ENCODE measurements at regions of chr10 and their contacts with region 1.

Region 1: GRCh38 chr10:102702742-102703141 is 11.5 kb downstream of the ARL3 start:
- DNase-seq: no peak
- H3K4me3 ChIP-seq: no peak overlapping the region
- H3K4me3 Mint-ChIP-seq: no peak overlapping the region
- H3K27ac Mint-ChIP-seq: no peak overlapping the region
- H3K4me1 ChIP-seq: peaks cover 11% of the 10 kb centered on the region
- H3K4me1 Mint-ChIP-seq: peaks cover 14% of the 10 kb centered on the region
- H3K27me3 ChIP-seq: no peaks in the 10 kb centered on the region
- H3K27me3 Mint-ChIP-seq: no peaks in the 10 kb centered on the region
- CTCF ChIP-seq: no peak

Region 2: DNA sequence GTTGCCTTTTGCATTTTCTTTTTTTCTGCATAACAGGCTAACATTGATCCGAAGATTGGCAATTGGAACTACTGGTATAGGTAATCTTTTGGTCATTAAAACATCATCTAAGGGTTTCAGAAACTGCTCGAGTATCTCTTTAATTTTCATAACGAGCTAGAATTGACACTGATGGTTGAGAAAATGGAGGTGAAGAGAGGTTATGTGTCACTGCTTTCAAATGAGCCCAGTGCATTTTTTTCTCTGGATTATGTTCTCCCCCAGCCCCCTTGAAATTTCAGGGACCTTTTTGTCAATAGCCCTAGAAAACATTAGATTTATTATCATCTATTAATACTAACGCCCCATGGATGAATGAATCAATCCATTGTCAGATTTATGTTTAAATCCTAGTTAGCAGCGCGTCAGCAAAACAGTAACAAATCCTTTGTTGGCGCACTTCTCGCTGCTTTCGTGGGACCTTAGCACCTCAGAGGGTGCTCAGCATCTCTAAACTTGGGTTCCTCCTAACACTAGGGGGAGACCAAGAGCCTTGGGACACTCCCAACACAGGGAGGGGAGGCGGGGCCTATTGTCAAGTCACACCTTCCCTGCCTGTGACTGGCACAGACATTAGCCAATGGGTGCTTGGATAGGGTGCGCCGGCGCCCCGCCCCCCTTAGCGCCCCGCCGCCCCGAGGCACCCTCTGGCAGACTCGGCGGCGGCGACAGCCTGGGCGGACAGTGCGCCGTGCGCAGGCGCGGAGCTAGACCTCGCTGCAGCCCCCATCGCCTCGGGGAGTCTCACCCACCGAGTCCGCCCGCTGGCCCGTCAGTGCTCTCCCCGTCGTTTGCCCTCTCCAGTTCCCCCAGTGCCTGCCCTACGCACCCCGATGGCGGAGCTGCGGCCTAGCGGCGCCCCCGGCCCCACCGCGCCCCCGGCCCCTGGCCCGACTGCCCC is 199.2 kb before region 1 on chr10 and contains the start of gene SUFU:
- CTCF ChIA-PET with region 1: no interaction called
- POLR2A ChIA-PET with region 1: no interaction called
- intact Hi-C with region 1: no loop called
- DNase-seq: peak; percentile 98 to 99
- H3K4me3 ChIP-seq: peak within 1 kb of the TSS; percentile 85
- H3K4me3 Mint-ChIP-seq: no peak within 1 kb of the TSS
- H3K27ac Mint-ChIP-seq: no peak within 1 kb of the TSS
- H3K4me1 ChIP-seq: no peaks in the 10 kb centered on the region
- H3K4me1 Mint-ChIP-seq: no peaks in the 10 kb centered on the region
- H3K27me3 ChIP-seq: no peaks in the 10 kb centered on the region
- H3K27me3 Mint-ChIP-seq: no peaks in the 10 kb centered on the region
- CTCF ChIP-seq: peak; percentile 76 to 96
- total RNA-seq, gene SUFU: 10.6 and 11.4 TPM in 2 replicates

Region 3: DNA sequence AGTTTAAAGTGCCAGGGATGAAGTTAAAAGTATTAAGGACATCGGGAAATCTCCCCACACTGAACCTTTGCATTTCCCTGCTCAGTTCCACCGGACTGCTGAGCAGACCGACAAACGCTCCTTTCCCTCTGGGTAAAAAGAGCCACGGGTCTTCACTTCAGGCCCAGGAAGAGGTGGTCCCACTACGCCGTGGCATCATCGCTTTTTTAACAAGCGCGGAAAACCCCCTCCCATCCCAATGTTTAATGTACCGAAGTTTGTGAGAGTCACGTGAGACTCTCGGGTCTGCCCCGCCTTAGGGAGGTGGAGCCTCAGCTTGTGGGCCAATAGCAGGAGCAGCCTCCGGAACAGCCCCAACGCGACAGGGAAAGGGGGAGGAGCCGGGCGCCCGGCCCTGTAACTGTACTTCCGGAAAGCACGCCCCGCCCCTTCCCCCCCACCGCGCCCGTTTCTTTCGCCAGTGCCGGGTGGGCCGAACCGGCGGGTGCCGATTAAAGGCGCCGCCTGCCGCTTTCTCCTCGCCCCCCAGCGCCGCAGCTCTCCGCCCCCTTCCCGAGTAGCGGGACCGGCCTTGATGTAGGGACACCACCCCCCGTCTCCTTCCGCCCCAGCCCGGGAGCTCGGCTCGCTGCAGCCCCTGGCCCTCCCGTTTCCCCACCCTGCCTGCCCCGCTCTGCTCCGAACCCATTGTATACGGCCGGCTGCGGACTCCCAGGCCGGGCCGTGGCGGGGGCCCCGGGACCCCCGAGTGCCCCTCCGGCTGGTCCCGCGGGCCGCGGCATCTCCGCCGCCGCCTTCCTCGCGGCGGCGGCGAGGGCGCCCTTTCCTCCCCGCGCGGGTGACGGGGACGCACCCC is 60.6 kb before region 1 on chr10:
- CTCF ChIA-PET with region 1: no interaction called
- POLR2A ChIA-PET with region 1: no interaction called
- intact Hi-C with region 1: no loop called
- DNase-seq: peak; percentile 97 to 98
- H3K4me3 ChIP-seq: peak overlapping the region; percentile 74
- H3K4me3 Mint-ChIP-seq: peak overlapping the region; percentile 92
- H3K27ac Mint-ChIP-seq: peak overlapping the region; percentile 78
- H3K4me1 ChIP-seq: peaks cover 11% of the 10 kb centered on the region
- H3K4me1 Mint-ChIP-seq: peaks cover 18% of the 10 kb centered on the region
- H3K27me3 ChIP-seq: no peaks in the 10 kb centered on the region
- H3K27me3 Mint-ChIP-seq: no peaks in the 10 kb centered on the region
- CTCF ChIP-seq: no peak

Region 4: GRCh38 chr10:102678842-102679289 is 23.9 kb before region 1 on chr10:
- CTCF ChIA-PET with region 1: no interaction called
- POLR2A ChIA-PET with region 1: interaction called, 13 read pairs
- intact Hi-C with region 1: no loop called
- DNase-seq: peak; percentile 77 to 81
- H3K4me3 ChIP-seq: no peak overlapping the region
- H3K4me3 Mint-ChIP-seq: peak overlapping the region; percentile 29
- H3K27ac Mint-ChIP-seq: no peak overlapping the region
- H3K4me1 ChIP-seq: no peaks in the 10 kb centered on the region; the same call in 1 of the 2 replicates
- H3K4me1 Mint-ChIP-seq: no peaks in the 10 kb centered on the region
- H3K27me3 ChIP-seq: no peaks in the 10 kb centered on the region
- H3K27me3 Mint-ChIP-seq: no peaks in the 10 kb centered on the region
- CTCF ChIP-seq: peak; percentile 83 to 94

Measured in Caco-2 (cell line).